ENCODE measurements at regions of chr7 and their contacts with region 1.

Region 1: GRCh38 chr7:123682690-123683089 is 27.0 kb downstream of the LMOD2 start:
- DNase-seq: no peak
- H3K4me3 ChIP-seq: no peak overlapping the region
- H3K27ac ChIP-seq: peak overlapping the region in 1 of 2 experiments; percentile 43; a peak in 1 of 4 replicates
- H3K4me1 ChIP-seq: peaks cover 0 to 11% of the 10 kb centered on the region in 2 experiments; a peak in 2 of 4 replicates
- H3K27me3 ChIP-seq: no peaks in the 10 kb centered on the region
- CTCF ChIP-seq: peak; percentile 82
- EP300 ChIP-seq: no peak
- RAD21 ChIP-seq: peak; percentile 79

Region 2: DNA sequence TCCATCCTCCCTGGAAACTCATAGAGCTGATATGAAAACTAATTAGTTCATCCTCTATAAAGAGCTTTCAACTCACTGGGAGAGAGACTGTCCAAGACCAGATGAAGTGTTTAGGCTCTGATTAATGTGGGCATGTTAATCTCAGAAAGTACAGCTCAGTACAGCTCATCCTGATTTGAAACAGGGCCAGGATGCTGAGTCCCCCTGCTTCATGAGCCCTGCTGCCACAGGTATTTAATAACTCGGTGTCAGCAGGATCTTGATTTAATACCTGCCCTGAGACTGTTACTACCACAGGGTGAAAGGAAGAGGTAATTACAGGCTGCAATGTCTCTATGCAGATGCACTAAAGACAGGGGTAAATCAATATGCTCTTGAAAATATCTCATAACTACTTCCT is 16.2 kb before region 1 on chr7:
- CTCF ChIA-PET with region 1: interaction called, 27 read pairs
- POLR2A ChIA-PET with region 1: no interaction called
- DNase-seq: peak; percentile 30
- H3K4me3 ChIP-seq: no peak overlapping the region
- H3K27ac ChIP-seq: no peak overlapping the region
- H3K4me1 ChIP-seq: peaks cover 0 to 10% of the 10 kb centered on the region in 2 experiments; a peak in 2 of 4 replicates
- H3K27me3 ChIP-seq: no peaks in the 10 kb centered on the region
- CTCF ChIP-seq: no peak
- EP300 ChIP-seq: 0 out of 4 replicates have a peak, but pooled peaks of 1 of the 2 experiments have one; percentile 35
- RAD21 ChIP-seq: no peak

Region 3: DNA sequence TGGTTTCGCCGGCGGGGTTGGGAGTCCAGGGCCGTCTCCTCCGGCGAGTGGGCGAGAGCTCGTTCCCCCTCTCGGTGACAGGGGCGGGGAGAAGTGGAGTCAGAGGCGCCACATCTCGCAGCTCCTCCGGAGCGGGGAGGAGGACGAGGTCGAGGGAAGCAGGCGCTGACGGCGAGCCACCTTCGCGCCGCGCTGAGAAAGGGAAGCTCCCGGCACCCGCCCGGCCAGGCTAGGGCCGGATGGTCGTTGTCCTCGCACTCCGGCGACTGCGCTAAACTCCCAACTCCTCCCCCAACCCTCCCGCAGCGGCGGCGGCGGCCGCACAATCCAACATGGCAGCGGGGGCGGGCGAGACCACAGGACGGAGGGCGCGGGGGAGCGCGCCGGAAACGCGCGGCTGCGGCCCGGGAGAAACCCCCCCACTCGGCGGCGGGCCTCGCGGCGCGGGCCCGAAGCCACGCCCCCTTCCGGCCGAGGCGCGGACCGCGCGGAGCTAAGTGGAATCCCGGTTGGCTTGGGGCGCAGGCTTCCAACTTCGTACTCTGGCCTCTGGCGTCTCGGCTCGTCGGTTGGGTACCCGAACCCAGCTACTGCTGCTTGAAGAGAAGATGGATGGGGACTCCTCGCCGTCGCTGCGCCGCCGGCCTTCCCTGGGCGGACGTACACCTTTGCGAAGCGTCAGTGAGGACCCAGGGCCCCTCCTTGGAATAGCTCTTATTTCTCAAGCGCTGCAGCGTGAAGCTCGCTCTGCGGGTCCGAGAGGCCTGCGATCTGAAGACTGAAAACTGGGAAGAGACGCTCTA is 66.2 kb after region 1 on chr7 and contains the start of gene WASL:
- CTCF ChIA-PET with region 1: interaction called, 10 read pairs
- POLR2A ChIA-PET with region 1: interaction called, 3 read pairs
- DNase-seq: peak; percentile 99
- H3K4me3 ChIP-seq: peak within 1 kb of the TSS; percentile 94 to 100
- H3K27ac ChIP-seq: peak within 1 kb of the TSS; percentile 96 to 100
- H3K4me1 ChIP-seq: peaks cover 27 to 57% of the 10 kb centered on the region in 2 experiments; a peak in 3 of 4 replicates
- H3K27me3 ChIP-seq: no peaks in the 10 kb centered on the region
- CTCF ChIP-seq: no peak
- EP300 ChIP-seq: peak; percentile 26 to 72; a peak in 2 of 4 replicates
- RAD21 ChIP-seq: peak; percentile 19; the same call in 1 of the 2 replicates
- polyA plus RNA-seq, gene WASL: 8.5 and 9.9 TPM in 2 replicates

Measured in SK-N-SH (cell line).